ENCODE measurements at regions of chr18 and their contacts with region 1.

Region 1: GRCh38 chr18:79988451-79989194 is at the start of gene TXNL4A:
- DNase-seq: peak; percentile 92
- ATAC-seq: peak; percentile 96
- H3K4me3 ChIP-seq: peak within 1 kb of the TSS; percentile 90
- H3K27ac ChIP-seq: peak within 1 kb of the TSS; percentile 79
- H3K4me1 ChIP-seq: peaks cover 15% of the 10 kb centered on the region
- H3K27me3 ChIP-seq: no peaks in the 10 kb centered on the region
- CTCF ChIP-seq: no peak
- total RNA-seq, gene TXNL4A: 148 and 159 TPM in 2 replicates

Region 2: GRCh38 chr18:80026363-80026762 is 37.7 kb after region 1 on chr18:
- CTCF ChIA-PET with region 1: interaction called, 5 read pairs
- POLR2A ChIA-PET with region 1: no interaction called
- intact Hi-C with region 1: loop called (anchors 2 kb)
- DNase-seq: peak; percentile 75
- ATAC-seq: peak; percentile 85
- H3K4me3 ChIP-seq: peak overlapping the region; percentile 45
- H3K27ac ChIP-seq: peak overlapping the region; percentile 62
- H3K4me1 ChIP-seq: peaks cover 21% of the 10 kb centered on the region
- H3K27me3 ChIP-seq: no peaks in the 10 kb centered on the region
- CTCF ChIP-seq: no peak

Region 3: DNA sequence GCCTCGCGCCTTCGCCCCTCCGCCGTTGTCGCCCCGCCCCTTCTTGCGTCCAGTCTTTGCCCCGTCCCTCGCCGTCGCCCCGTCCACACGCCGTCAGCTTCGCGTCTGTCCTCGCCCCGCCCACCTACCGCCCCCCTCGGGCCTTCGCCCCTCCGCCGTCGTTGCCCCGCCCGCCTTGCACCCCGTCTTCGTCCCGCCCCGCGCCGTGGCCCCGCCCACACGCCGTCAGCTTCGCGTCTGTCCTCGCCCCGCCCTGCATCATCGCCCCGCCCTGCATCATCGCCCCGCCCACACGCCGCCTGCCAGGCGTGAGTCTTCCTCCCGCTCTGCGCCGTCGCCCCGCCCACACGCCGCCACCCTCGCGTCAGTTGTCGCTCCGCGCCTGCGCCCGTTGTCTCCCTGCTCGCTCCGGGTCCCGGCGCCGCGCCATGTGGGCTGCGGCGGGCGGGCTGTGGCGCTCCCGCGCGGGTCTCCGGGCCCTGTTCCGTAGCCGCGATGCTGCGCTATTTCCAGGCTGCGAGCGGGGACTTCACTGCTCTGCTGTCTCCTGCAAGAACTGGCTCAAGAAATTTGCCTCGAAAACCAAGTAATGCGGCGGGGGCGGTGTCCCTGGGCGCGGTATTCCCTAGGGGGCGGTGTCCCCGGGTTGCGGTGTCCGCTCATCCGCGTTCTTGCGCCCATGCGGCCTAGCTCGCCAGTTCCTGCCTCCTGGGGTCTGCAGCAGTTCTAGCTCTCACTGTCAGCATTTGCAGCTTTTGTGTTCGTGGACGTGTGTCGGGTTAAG is 45.6 kb after region 1 on chr18 and contains the start of gene RBFA:
- CTCF ChIA-PET with region 1: no interaction called
- POLR2A ChIA-PET with region 1: interaction called, 24 read pairs
- intact Hi-C with region 1: loop called (anchors 2 kb)
- DNase-seq: peak; percentile 95
- ATAC-seq: peak; percentile 76
- H3K4me3 ChIP-seq: peak within 1 kb of the TSS; percentile 97
- H3K27ac ChIP-seq: peak within 1 kb of the TSS; percentile 78
- H3K4me1 ChIP-seq: peaks cover 14% of the 10 kb centered on the region; the same call in 1 of the 2 replicates
- H3K27me3 ChIP-seq: no peaks in the 10 kb centered on the region
- CTCF ChIP-seq: peak; percentile 56; the same call in 1 of the 2 replicates
- total RNA-seq, gene RBFA: 38.9 and 50.7 TPM in 2 replicates

Region 4: GRCh38 chr18:80196528-80197250 is 208.1 kb after region 1 on chr18:
- CTCF ChIA-PET with region 1: no interaction called
- POLR2A ChIA-PET with region 1: no interaction called
- intact Hi-C with region 1: no loop called
- DNase-seq: no peak
- ATAC-seq: no peak
- H3K4me3 ChIP-seq: no peak overlapping the region
- H3K27ac ChIP-seq: no peak overlapping the region
- H3K4me1 ChIP-seq: no peaks in the 10 kb centered on the region
- H3K27me3 ChIP-seq: no peaks in the 10 kb centered on the region
- CTCF ChIP-seq: no peak

Region 5: GRCh38 chr18:80233899-80234298 is 245.3 kb after region 1 on chr18:
- CTCF ChIA-PET with region 1: no interaction called
- POLR2A ChIA-PET with region 1: no interaction called
- intact Hi-C with region 1: no loop called
- DNase-seq: no peak
- ATAC-seq: no peak
- H3K4me3 ChIP-seq: no peak overlapping the region
- H3K27ac ChIP-seq: no peak overlapping the region
- H3K4me1 ChIP-seq: no peaks in the 10 kb centered on the region
- H3K27me3 ChIP-seq: no peaks in the 10 kb centered on the region
- CTCF ChIP-seq: no peak